ENCODE measurements at regions of chr5 and their contacts with region 1.

Region 1: DNA sequence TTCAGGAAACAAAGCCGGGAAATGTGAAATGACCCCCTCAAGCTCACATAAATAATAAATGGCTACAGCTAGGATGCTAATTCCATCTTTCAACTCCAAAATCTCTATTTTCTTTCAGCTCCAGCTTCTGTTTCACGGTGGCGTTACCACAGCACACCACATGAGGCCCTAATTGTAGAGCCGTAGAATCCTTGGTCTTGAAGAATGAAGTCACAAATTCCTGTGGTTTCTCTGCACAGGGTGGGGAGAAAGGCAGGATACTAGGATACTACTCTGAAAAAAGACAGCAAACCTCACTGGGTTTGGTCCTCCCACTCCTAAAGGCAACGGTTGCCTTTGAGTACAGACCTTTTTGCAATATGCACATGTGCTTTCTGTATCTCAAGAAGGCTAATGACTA is 13.9 kb upstream of the RARS1 start:
- DNase-seq: no peak
- ATAC-seq: peak in 3 of 8 donors; percentile 70 to 77 (median 70)
- H3K4me3 ChIP-seq: no peak overlapping the region
- H3K27ac ChIP-seq: no peak overlapping the region
- H3K4me1 ChIP-seq: peaks cover 0 to 4% (median 0%) of the 10 kb centered on the region in 9 donors
- H3K27me3 ChIP-seq: no peaks in the 10 kb centered on the region
- CTCF ChIP-seq: peak in 1 of 9 donors; percentile 9

Region 2: DNA sequence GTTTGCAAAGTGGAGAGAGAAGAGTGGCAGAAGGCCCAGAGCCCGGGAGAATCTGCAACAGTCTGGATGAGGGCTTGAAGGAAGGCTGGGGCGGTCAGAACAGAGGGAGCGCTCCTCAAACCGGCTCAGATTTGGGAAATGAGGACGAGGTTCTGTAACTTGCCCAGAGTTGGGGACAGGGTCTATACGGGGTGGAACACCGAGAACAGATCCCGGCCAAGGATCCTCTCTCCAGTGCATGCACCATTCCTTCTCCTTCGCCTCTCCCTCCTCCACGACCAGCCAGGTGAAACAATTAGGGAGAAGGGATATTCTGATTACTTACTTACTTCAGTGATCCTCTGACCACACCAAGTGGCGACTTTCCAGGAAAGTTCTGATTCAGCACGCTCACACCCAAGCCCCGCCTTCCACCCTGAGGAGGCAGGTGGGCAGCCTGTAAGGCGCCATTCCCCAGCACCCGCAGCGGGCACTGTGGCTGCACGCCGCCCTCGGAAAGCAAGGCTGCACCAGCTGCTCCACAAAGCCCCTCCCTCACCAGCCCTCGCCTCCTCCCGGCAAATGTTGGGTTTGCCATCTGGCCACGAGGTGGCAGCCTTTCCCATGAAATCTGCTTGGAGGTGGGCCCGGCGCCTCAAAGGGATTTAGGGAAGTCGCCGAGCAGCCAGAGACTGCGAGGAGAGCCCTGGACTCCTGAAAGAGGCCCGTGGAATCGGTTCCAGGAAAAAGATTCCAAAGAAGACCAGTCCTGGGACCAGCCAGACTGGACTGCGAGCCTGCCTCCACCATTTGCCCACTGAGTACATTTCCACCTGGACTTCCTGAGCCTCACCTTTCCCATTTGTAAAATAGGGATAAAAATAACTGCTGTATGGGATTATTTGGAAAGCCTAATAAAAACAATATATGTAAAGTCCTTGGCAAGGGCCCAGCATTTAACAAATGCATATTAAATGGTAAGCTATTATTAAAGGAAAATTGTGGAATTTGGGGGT is 203.1 kb before region 1 on chr5:
- intact Hi-C with region 1: loop called in 1 of 10 experiments (anchors 5 kb)
- DNase-seq: peak; percentile 82 to 84
- ATAC-seq: peak; percentile 78 to 89 (median 88)
- H3K4me3 ChIP-seq: peak overlapping the region in 9 of 10 donors; percentile 12 to 49 (median 37)
- H3K27ac ChIP-seq: no peak overlapping the region
- H3K4me1 ChIP-seq: peaks cover 0 to 18% (median 14%) of the 10 kb centered on the region in 9 donors
- H3K27me3 ChIP-seq: peaks cover 0 to 8% (median 0%) of the 10 kb centered on the region in 7 donors
- CTCF ChIP-seq: peak; percentile 65 to 97 (median 91)

Region 3: GRCh38 chr5:168288349-168289245 is 183.7 kb before region 1 on chr5:
- intact Hi-C with region 1: loop called in 1 of 10 experiments (anchors 5 kb)
- DNase-seq: no peak
- ATAC-seq: no peak
- H3K4me3 ChIP-seq: no peak overlapping the region
- H3K27ac ChIP-seq: no peak overlapping the region
- H3K4me1 ChIP-seq: peaks cover 0 to 11% (median 6%) of the 10 kb centered on the region in 9 donors
- H3K27me3 ChIP-seq: peaks cover 0 to 45% (median 35%) of the 10 kb centered on the region in 7 donors
- CTCF ChIP-seq: no peak

Region 4: GRCh38 chr5:168502563-168503237 is 30.4 kb after region 1 on chr5:
- intact Hi-C with region 1: no loop called
- DNase-seq: no peak
- ATAC-seq: no peak
- H3K4me3 ChIP-seq: no peak overlapping the region
- H3K27ac ChIP-seq: no peak overlapping the region
- H3K4me1 ChIP-seq: no peaks in the 10 kb centered on the region
- H3K27me3 ChIP-seq: no peaks in the 10 kb centered on the region
- CTCF ChIP-seq: no peak

Region 5: DNA sequence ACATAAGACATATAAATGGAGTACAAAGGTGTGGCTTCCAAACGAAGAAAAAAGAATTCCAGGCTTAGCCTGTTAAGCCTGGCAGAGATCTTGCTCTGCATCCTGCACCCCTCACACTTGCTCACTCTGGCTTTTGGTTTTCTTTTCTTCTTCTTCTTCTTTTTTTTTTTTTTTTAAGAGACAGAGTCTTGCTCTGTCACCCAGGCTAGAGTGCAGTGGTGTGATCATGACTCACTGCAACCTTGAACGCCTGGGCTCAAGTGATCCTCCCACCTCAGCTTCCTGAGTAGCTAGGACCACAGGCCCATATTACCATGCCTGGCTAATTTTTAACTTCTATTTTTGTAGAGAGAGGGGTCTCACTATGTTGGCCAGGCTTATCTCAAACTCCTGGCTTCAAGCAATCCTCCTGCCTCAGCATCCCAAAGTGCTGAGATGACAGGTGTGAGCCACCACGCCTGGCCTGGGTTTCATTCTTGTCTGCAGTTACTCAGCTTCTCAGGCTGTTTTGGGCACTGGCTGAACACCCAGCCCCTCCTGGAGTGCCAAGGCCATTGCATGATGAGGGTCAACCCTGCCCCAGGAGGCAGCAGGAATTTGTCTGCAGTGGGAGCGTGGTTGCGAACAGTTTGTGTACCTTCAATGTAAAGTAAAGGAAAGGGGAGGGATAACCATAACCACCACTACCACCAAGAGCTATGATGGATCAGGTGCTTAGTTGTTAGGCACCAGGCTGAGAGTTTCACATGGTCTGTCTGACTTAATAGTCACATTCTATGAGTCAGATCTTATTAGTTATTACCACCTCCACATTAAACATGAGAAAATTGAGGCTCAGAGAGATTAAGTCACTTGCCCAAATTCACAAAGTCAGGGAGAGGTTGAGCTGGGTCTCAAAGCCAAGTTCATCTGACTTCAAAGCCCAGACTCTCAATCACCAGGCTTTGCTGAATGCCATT is 326.0 kb after region 1 on chr5:
- intact Hi-C with region 1: no loop called
- DNase-seq: no peak
- ATAC-seq: no peak
- H3K4me3 ChIP-seq: no peak overlapping the region
- H3K27ac ChIP-seq: no peak overlapping the region
- H3K4me1 ChIP-seq: peaks cover 0 to 12% (median 3%) of the 10 kb centered on the region in 9 donors
- H3K27me3 ChIP-seq: no peaks in the 10 kb centered on the region
- CTCF ChIP-seq: no peak

Measured in heart right ventricle (tissue), 16 donors.